Activated CD4-positive, alpha-beta memory T cell treated with anti-CD3 and anti-CD28 coated beads, Interleukin-2, amount 10 ng/mL, durations not matched to agents 7 days and 5 days (primary cell): ENCODE measurements at regions of chr12 and their contacts with region 1.

Region 1: GRCh38 chr12:112108201-112109079 is at the start of gene NAA25:
- DNase-seq: peak; percentile 90
- H3K4me3 Mint-ChIP-seq: peak within 1 kb of the TSS; percentile 97
- H3K27ac Mint-ChIP-seq: peak within 1 kb of the TSS; percentile 99
- H3K4me1 Mint-ChIP-seq: peaks cover 46% of the 10 kb centered on the region
- H3K27me3 Mint-ChIP-seq: no peaks in the 10 kb centered on the region
- total RNA-seq, gene NAA25: 24.2 to 25.0 TPM

Region 2: DNA sequence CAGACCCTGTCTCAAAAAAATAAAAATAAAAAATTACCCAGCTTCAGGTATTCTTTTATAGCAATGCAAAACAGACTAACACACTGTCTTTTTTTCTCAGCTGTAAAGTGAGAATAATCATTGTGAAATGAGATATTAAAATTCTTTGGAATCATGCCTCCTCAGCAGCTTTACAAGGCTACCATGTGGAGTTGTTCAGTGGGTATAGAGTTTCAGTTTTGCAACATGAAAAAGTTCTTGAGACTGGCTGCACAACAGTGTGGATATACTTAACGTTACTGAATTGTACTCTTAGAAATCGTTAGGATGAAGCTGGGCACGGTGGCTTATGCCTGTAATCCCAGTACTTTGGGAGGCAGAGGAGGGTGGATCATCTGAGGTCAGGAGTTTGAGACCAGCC is 282.1 kb before region 1 on chr12:
- CTCF ChIA-PET with region 1: no interaction called
- POLR2A ChIA-PET with region 1: no interaction called
- DNase-seq: no peak
- H3K4me3 Mint-ChIP-seq: no peak overlapping the region
- H3K27ac Mint-ChIP-seq: no peak overlapping the region
- H3K4me1 Mint-ChIP-seq: no peaks in the 10 kb centered on the region
- H3K27me3 Mint-ChIP-seq: peaks cover 33% of the 10 kb centered on the region

Region 3: DNA sequence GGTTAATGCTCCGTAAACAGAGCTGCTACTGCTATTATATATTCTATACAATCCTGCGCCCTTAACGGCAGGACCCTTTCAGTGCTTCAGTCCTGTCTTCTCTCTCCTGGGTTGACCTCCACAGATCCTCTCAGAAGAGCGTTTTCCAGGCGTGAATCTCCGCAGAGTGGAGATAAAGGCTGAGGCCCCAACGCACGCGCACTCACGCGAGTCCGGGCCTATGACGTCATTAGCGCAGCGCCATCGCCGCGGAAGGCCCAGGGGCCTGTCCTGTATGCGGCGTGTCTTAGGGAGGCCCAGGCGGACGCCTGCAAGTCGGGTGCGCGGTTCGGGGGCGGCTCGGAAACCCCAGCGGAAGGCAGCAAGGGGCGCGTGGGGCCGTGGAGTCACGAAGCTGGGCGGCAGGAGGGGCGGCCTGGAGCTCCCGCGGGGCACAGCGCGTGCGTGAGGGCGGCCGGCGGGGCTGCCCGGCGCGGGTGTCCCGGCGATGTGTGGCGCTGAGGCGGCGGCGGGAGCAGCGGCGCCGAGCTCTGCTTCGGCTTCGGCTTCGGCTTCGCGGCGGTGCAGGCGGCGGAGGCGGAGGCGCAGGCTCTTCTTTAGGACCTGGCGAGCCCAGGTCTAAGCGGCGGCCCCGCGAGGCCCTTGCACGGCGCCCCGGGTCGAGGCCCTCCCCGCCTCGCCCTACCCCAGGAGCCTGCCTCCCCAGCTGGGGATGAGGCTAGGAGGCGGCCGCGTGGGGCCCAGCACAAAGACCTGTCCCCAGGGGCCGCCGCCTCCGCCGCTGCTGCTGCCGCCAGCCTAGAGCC is 266.5 kb before region 1 on chr12 and contains the start of gene MAPKAPK5:
- CTCF ChIA-PET with region 1: interaction called, 3 read pairs
- POLR2A ChIA-PET with region 1: interaction called, 10 read pairs
- DNase-seq: peak; percentile 96
- H3K4me3 Mint-ChIP-seq: peak within 1 kb of the TSS; percentile 98
- H3K27ac Mint-ChIP-seq: peak within 1 kb of the TSS; percentile 92
- H3K4me1 Mint-ChIP-seq: peaks cover 51% of the 10 kb centered on the region
- H3K27me3 Mint-ChIP-seq: no peaks in the 10 kb centered on the region
- total RNA-seq, gene MAPKAPK5: 40.4 to 44.8 TPM

Region 4: DNA sequence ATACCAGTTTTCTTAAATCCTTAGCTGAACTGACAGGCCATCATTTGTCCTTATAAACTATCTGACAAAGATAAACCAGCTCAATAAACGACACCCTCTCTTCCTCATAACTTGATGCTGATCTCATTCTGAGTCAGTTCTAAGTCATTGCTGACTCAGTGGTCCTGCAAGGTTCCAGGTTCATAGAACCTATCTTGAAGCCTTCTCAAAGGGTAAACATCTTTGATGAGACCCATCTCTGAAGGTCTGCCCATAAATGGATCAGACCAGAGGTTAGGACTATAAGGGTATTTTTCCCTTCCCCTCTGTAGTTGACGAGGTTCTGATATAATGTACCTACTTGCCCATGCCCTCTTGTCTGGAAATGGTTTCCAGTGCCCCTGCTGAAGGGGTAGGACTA is 11.8 kb before region 1 on chr12:
- CTCF ChIA-PET with region 1: interaction called, 11 read pairs
- POLR2A ChIA-PET with region 1: interaction called, 42 read pairs
- DNase-seq: no peak
- H3K4me3 Mint-ChIP-seq: no peak overlapping the region
- H3K27ac Mint-ChIP-seq: peak overlapping the region; percentile 75
- H3K4me1 Mint-ChIP-seq: peaks cover 36% of the 10 kb centered on the region
- H3K27me3 Mint-ChIP-seq: no peaks in the 10 kb centered on the region

Region 5: GRCh38 chr12:112125250-112125999 is 17.0 kb after region 1 on chr12 and contains the start of gene TRAFD1:
- CTCF ChIA-PET with region 1: interaction called, 18 read pairs
- POLR2A ChIA-PET with region 1: interaction called, 343 read pairs
- DNase-seq: peak; percentile 99
- H3K4me3 Mint-ChIP-seq: peak within 1 kb of the TSS; percentile 89
- H3K27ac Mint-ChIP-seq: peak within 1 kb of the TSS; percentile 81
- H3K4me1 Mint-ChIP-seq: peaks cover 41% of the 10 kb centered on the region
- H3K27me3 Mint-ChIP-seq: peaks cover 3% of the 10 kb centered on the region
- total RNA-seq, gene TRAFD1: 74.8 to 75.5 TPM

Region 6: GRCh38 chr12:112130441-112130998 is 22.1 kb after region 1 on chr12:
- CTCF ChIA-PET with region 1: interaction called, 18 read pairs
- POLR2A ChIA-PET with region 1: interaction called, 343 read pairs
- DNase-seq: no peak
- H3K4me3 Mint-ChIP-seq: peak overlapping the region; percentile 70
- H3K27ac Mint-ChIP-seq: peak overlapping the region; percentile 89
- H3K4me1 Mint-ChIP-seq: peaks cover 56% of the 10 kb centered on the region
- H3K27me3 Mint-ChIP-seq: no peaks in the 10 kb centered on the region